Tibial artery (tissue), 4 donors: ENCODE measurements at regions of chr3 and their contacts with region 1.

Region 1: DNA sequence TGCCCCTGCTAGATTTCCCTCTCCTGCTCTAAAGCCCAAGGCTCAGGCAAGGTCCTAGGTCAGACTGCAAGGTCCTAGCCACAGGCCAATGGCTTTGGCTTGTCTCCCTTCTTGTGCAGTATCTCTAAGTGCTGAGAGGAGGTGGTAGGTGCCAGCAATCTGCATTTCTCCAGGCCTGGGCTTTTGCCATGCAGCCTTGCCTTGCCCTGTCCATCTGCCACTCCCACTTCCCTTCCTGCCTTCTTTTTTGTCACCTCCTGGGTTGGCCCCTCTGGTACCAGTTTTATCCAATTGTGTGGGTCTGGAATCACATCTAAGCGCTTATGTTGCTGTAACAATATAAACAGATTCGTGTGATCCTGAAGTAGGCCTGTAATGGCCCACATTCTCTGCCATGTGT is 109.9 kb downstream of the MYRIP start:
- DNase-seq: no peak
- H3K4me3 ChIP-seq: no peak overlapping the region
- H3K27ac ChIP-seq: no peak overlapping the region
- H3K4me1 ChIP-seq: peaks cover 0 to 4% (median 0%) of the 10 kb centered on the region in 4 donors
- H3K27me3 ChIP-seq: no peaks in the 10 kb centered on the region
- CTCF ChIP-seq: no peak

Region 2: GRCh38 chr3:39812537-39812936 is 106.7 kb before region 1 on chr3:
- intact Hi-C with region 1: no loop called
- DNase-seq: no peak
- H3K4me3 ChIP-seq: no peak overlapping the region
- H3K27ac ChIP-seq: no peak overlapping the region
- H3K4me1 ChIP-seq: peaks cover 0 to 23% (median 15%) of the 10 kb centered on the region in 4 donors
- H3K27me3 ChIP-seq: peaks cover 0 to 21% of the 10 kb centered on the region in 2 donors
- CTCF ChIP-seq: peak in 1 of 2 experiments; percentile 23

Region 3: DNA sequence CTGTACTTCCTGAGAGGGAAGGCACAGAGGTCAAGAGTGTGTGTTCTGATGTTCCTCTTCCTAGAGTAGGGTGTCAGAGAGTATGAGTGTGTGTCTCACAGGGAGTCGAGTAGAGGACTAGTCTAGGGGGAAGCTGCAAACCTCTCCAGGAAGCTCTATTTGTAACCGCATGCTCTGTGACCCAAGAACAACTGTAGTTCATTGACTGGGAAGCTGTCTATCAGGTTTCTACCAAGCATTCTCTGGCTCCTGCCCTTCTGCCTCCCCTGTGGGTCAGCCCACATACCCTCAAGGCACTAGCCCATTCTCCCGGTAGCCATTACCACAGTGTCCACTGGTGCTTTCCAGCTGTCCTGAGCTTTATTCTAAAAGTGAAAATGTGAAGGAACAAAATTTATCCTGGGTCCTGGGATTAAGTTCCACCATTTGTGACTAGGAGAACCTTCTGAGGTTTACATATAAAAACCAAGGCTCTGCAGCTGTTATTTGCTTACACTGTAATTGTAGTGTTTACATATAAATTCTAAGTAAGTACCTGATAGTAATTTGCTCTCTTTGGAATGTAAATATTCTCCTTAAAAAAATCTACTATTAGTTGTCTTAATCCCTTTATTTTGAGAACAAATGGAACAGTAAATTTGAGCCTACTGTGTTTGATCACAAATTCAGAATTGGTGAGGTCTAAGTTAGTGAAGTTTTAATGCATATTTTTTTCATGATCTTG is 69.1 kb before region 1 on chr3:
- intact Hi-C with region 1: no loop called
- DNase-seq: no peak
- H3K4me3 ChIP-seq: no peak overlapping the region
- H3K27ac ChIP-seq: no peak overlapping the region
- H3K4me1 ChIP-seq: peaks cover 0 to 20% (median 2%) of the 10 kb centered on the region in 4 donors
- H3K27me3 ChIP-seq: no peaks in the 10 kb centered on the region
- CTCF ChIP-seq: no peak

Region 4: DNA sequence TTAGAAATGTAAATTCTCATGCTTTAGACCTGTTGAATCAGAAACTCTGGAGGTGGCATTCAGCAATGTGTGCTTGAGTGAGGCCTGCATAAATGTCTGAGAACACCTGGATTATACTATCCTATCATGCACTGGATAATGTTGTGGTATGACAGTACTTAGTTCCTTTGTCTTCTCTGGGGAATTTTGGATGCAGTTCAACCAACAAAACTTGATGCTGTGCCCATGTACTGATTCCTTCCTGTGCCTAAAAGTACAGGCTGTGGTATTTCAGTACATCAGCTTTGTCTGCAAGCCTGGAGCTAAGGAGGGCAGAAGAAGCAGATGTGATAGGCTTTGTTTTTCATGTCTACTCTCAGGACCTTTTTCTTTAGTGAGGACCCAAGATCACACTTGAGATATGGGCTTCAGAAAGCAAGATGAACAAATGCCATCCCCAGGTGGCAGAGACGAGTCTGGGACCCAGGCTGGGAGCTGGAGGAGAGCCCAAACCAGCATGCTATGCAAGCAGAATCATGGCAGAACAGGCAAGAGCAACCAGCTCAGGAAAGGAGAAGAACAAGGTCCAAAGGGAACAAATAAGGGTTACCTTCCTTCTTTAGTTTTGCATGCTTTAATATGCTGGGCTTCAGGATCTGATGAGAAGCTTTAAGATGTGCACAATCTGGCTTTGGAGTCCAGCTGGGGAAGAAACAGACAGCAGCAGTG is 14.9 kb after region 1 on chr3:
- intact Hi-C with region 1: loop called (anchors 2 kb)
- DNase-seq: no peak
- H3K4me3 ChIP-seq: no peak overlapping the region
- H3K27ac ChIP-seq: peak overlapping the region in 1 of 2 donors; percentile 30
- H3K4me1 ChIP-seq: peaks cover 0 to 38% (median 11%) of the 10 kb centered on the region in 4 donors
- H3K27me3 ChIP-seq: no peaks in the 10 kb centered on the region
- CTCF ChIP-seq: no peak